Caco-2 (cell line): ENCODE measurements at regions of chr7 and their contacts with region 1.

Region 1: GRCh38 chr7:83976295-83976694 is 218.3 kb downstream of the SEMA3A start:
- DNase-seq: peak in 1 of 2 experiments; percentile 63
- H3K4me3 ChIP-seq: no peak overlapping the region
- H3K4me3 Mint-ChIP-seq: no peak overlapping the region
- H3K27ac Mint-ChIP-seq: no peak overlapping the region
- H3K4me1 ChIP-seq: no peaks in the 10 kb centered on the region
- H3K4me1 Mint-ChIP-seq: no peaks in the 10 kb centered on the region
- H3K27me3 ChIP-seq: no peaks in the 10 kb centered on the region
- H3K27me3 Mint-ChIP-seq: no peaks in the 10 kb centered on the region
- CTCF ChIP-seq: peak; percentile 42 to 69

Region 2: GRCh38 chr7:84149573-84149972 is 173.3 kb after region 1 on chr7:
- CTCF ChIA-PET with region 1: no interaction called
- POLR2A ChIA-PET with region 1: no interaction called
- intact Hi-C with region 1: loop called (anchors 5 kb)
- DNase-seq: no peak
- H3K4me3 ChIP-seq: peak overlapping the region; percentile 51
- H3K4me3 Mint-ChIP-seq: peak overlapping the region; percentile 93
- H3K27ac Mint-ChIP-seq: peak overlapping the region; percentile 97
- H3K4me1 ChIP-seq: peaks cover 40% of the 10 kb centered on the region
- H3K4me1 Mint-ChIP-seq: peaks cover 39% of the 10 kb centered on the region
- H3K27me3 ChIP-seq: no peaks in the 10 kb centered on the region
- H3K27me3 Mint-ChIP-seq: no peaks in the 10 kb centered on the region
- CTCF ChIP-seq: no peak

Region 3: DNA sequence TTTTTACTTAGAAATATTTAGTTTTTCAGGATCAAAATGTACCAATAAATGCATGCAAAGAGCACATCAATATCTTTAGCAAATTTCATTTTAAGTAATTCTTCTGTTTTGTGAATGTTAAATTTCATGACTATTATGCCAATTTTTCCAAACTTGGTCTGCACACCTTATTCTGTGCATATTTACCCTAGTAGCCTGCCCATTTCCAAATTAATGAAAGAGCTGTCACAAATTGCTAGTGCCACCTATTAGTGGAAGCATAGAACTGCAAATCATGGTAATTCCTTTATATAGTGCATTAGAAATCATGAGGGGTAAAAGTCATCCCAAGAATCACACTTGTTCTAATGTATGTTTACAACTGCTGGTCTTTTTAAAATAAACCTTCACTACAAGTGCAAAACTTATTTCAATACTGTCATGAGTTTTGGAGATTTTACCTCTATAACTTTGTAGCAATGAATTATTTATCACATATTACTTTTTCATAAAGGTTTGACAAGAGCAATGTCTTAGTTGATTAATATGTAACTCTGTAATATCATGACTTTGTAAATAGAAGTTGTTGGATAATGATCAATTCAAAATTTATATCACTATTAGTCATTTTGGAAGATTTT is 212.6 kb after region 1 on chr7:
- CTCF ChIA-PET with region 1: no interaction called
- POLR2A ChIA-PET with region 1: no interaction called
- intact Hi-C with region 1: loop called (anchors 1 kb)
- DNase-seq: peak in 1 of 2 experiments; percentile 13
- H3K4me3 ChIP-seq: no peak overlapping the region
- H3K4me3 Mint-ChIP-seq: no peak overlapping the region
- H3K27ac Mint-ChIP-seq: no peak overlapping the region
- H3K4me1 ChIP-seq: peaks cover 35% of the 10 kb centered on the region
- H3K4me1 Mint-ChIP-seq: peaks cover 29% of the 10 kb centered on the region
- H3K27me3 ChIP-seq: no peaks in the 10 kb centered on the region
- H3K27me3 Mint-ChIP-seq: no peaks in the 10 kb centered on the region
- CTCF ChIP-seq: peak; percentile 54 to 56

Region 4: GRCh38 chr7:84454174-84454959 is 478.1 kb after region 1 on chr7:
- CTCF ChIA-PET with region 1: no interaction called
- POLR2A ChIA-PET with region 1: no interaction called
- intact Hi-C with region 1: loop called (anchors 1 kb)
- DNase-seq: no peak
- H3K4me3 ChIP-seq: no peak overlapping the region
- H3K4me3 Mint-ChIP-seq: no peak overlapping the region
- H3K27ac Mint-ChIP-seq: no peak overlapping the region
- H3K4me1 ChIP-seq: no peaks in the 10 kb centered on the region
- H3K4me1 Mint-ChIP-seq: no peaks in the 10 kb centered on the region
- H3K27me3 ChIP-seq: no peaks in the 10 kb centered on the region
- H3K27me3 Mint-ChIP-seq: no peaks in the 10 kb centered on the region
- CTCF ChIP-seq: no peak